ENCODE measurements at regions of chr11 and their contacts with region 1.

Region 1: GRCh38 chr11:94602430-94603372 is 35.5 kb downstream of the PIWIL4 start:
- DNase-seq: peak; percentile 18
- H3K4me3 Mint-ChIP-seq: no peak overlapping the region
- H3K27ac Mint-ChIP-seq: no peak overlapping the region
- H3K4me1 Mint-ChIP-seq: peaks cover 4% of the 10 kb centered on the region
- H3K27me3 Mint-ChIP-seq: peaks cover 2% of the 10 kb centered on the region

Region 2: DNA sequence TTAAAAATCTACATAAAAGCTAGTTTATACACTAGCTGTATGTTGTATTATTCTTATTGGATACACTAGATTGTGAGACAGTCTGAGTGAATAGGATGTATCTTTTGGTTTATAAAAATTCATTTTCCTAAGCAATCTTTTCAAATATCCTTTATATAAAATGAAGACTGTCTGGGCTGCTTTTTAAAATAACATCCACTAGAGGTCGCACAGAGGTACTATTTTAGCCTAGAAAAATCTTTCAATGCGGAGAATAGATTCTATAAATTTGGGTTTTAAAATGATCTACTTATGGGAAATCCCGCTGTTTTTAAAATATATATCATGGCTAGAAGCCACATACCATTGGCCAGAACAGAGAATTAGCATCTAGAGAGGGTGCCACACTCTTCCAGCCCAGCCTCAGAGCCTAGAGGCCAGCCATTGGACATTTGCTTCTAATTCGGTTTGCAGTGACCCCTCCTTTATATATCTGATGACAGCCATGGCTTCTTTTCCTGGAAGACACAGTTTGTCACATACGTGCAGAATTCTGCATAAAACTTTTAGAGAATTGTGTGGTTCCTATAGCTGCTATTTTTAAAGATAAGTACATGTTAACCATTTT is 83.1 kb before region 1 on chr11:
- intact Hi-C with region 1: loop called (anchors 1 kb)
- DNase-seq: no peak
- H3K4me3 Mint-ChIP-seq: no peak overlapping the region
- H3K27ac Mint-ChIP-seq: no peak overlapping the region
- H3K4me1 Mint-ChIP-seq: no peaks in the 10 kb centered on the region
- H3K27me3 Mint-ChIP-seq: peaks cover 32% of the 10 kb centered on the region

Measured in activated T-helper 2 cell treated with anti-CD3 and anti-CD28 coated beads, Interferon-gamma antibody, Interleukin-2, Interleukin-4, amounts not matched to agents 10 μg/mL and 5 μg/mL and 100 μg/mL, durations not matched to agents 14 hours and 24 hours and 36 hours (primary cell).